ENCODE measurements at regions of chr2 and their contacts with region 1.

Region 1: DNA sequence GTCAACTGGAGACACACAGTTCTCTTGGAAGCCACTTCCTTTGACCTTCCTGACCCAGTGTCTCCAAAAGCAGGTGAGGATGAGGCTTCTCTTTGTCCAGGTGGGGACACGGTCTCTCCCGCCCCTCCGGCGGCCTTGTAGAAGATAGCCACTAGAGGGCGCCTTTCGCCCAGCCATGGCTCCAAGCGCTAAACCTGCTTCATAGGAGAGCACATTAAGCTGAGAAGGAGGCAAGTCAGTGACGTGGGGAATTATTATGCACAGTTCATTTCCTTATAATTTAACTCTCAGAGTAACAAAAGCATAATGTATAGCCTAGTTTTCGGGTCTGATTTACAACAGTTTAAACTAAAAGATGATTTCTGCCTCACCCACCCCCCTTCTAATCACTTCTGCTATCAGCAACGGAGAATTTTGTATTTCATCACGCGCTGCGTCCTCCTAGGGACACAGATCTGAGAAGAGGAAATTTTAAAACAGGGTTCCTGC is 208.7 kb downstream of the ICOS start:
- DNase-seq: peak; percentile 74 to 79
- ATAC-seq: peak; percentile 87 to 98 (median 96)
- H3K4me3 ChIP-seq: peak overlapping the region; percentile 14 to 59 (median 44)
- H3K27ac ChIP-seq: peak overlapping the region in 6 of 10 donors; percentile 28 to 66 (median 53)
- H3K4me1 ChIP-seq: peaks cover 0 to 11% (median 6%) of the 10 kb centered on the region in 9 donors
- H3K27me3 ChIP-seq: peaks cover 0 to 5% (median 0%) of the 10 kb centered on the region in 7 donors
- CTCF ChIP-seq: peak in 8 of 9 donors; percentile 89 to 98 (median 96)

Region 2: GRCh38 chr2:203830304-203831055 is 314.8 kb before region 1 on chr2:
- intact Hi-C with region 1: no loop called
- DNase-seq: no peak
- ATAC-seq: peak in 2 of 8 donors; percentile 47 to 53
- H3K4me3 ChIP-seq: no peak overlapping the region
- H3K27ac ChIP-seq: no peak overlapping the region
- H3K4me1 ChIP-seq: peaks cover 0 to 3% (median 0%) of the 10 kb centered on the region in 9 donors
- H3K27me3 ChIP-seq: no peaks in the 10 kb centered on the region
- CTCF ChIP-seq: no peak

Region 3: DNA sequence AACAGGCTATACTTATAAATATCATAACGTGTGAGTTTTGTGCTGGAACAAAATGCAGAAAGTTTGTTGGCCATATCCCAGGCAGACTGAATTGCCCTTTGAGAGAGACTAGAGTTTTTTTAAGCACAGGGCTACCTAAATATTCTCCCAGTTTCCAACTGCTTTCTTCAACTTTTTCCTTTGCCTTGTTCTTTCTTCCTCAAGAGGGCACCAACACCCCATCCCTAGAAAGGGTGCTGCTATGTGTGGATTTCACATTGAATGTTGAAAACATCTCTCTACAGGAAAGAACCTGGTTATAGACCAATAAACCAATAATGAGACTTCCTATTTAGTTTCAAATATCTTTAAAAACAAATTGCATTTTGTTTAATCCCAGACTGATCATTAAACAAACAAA is 120.8 kb before region 1 on chr2:
- intact Hi-C with region 1: loop called in 1 of 10 experiments (anchors 10 kb)
- DNase-seq: no peak
- ATAC-seq: peak in 4 of 8 donors; percentile 33 to 61 (median 51)
- H3K4me3 ChIP-seq: no peak overlapping the region
- H3K27ac ChIP-seq: no peak overlapping the region
- H3K4me1 ChIP-seq: no peaks in the 10 kb centered on the region
- H3K27me3 ChIP-seq: peaks cover 0 to under 1% (median 0%) of the 10 kb centered on the region in 7 donors
- CTCF ChIP-seq: peak in 7 of 9 donors; percentile 40 to 68 (median 59)

Region 4: GRCh38 chr2:204039298-204039838 is 105.9 kb before region 1 on chr2:
- intact Hi-C with region 1: no loop called
- DNase-seq: no peak
- ATAC-seq: no peak
- H3K4me3 ChIP-seq: no peak overlapping the region
- H3K27ac ChIP-seq: no peak overlapping the region
- H3K4me1 ChIP-seq: no peaks in the 10 kb centered on the region
- H3K27me3 ChIP-seq: peaks cover 0 to 6% (median 0%) of the 10 kb centered on the region in 7 donors
- CTCF ChIP-seq: no peak

Region 5: GRCh38 chr2:204691911-204692510 is 546.7 kb after region 1 on chr2:
- intact Hi-C with region 1: loop called in 1 of 10 experiments (anchors 10 kb)
- DNase-seq: peak in 1 of 2 donors; percentile 67
- ATAC-seq: peak in 7 of 8 donors; percentile 75 to 90 (median 85)
- H3K4me3 ChIP-seq: no peak overlapping the region
- H3K27ac ChIP-seq: peak overlapping the region in 1 of 10 donors; percentile 37
- H3K4me1 ChIP-seq: peaks cover 0 to 14% (median 3%) of the 10 kb centered on the region in 9 donors
- H3K27me3 ChIP-seq: no peaks in the 10 kb centered on the region
- CTCF ChIP-seq: peak; percentile 48 to 90 (median 76)

Region 6: DNA sequence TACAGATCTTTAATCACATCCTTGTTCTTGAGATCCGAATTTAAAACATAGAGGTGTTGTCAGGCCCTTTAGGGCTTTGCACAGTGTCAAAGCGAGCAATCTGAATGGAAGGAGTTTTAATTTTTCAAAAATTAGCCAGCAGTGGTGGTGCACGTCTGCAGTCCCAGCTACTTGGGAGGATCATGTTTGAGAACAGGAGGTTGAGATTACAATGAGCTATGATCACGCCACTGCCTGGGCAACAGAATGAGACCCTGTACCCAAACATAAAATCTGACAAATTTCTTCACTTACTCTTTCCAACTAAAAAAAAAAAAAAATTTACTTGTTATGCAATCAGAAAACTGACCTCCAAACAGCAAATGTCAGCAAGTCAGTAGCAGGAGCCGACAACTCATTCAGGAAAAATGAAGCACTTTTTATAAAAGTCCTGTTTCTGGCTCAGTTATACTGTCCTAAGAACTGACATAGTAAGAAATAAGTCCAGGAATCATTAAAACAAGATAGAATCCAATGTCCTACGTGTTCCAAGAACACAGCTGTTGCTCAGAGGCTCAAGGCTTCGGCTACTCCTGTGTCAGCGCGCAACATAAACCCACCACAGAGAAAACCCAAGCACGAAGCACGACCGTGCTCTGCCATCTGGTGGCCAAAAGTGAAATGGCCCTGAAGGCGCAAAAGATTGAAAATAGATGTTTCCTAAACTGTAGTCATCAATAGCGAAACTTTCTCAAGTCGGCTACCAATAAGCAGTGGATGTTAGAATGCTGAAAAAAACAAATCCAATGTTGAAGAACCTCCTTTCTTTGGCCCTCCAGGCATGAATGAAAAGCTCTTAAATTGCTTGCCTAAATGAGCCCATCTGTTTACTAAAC is 1802.6 kb after region 1 on chr2:
- intact Hi-C with region 1: loop called in 1 of 10 experiments (anchors 2 kb)
- DNase-seq: peak; percentile 57 to 65
- ATAC-seq: peak; percentile 71 to 93 (median 90)
- H3K4me3 ChIP-seq: no peak overlapping the region
- H3K27ac ChIP-seq: peak overlapping the region in 3 of 10 donors; percentile 2 to 22 (median 2)
- H3K4me1 ChIP-seq: peaks cover 0 to 33% (median 0%) of the 10 kb centered on the region in 9 donors
- H3K27me3 ChIP-seq: peaks cover 0 to 8% (median 0%) of the 10 kb centered on the region in 7 donors
- CTCF ChIP-seq: peak; percentile 62 to 99 (median 91)

Measured in heart right ventricle (tissue), 16 donors.